ENCODE measurements at regions of chr18 and their contacts with region 1.

Region 1: DNA sequence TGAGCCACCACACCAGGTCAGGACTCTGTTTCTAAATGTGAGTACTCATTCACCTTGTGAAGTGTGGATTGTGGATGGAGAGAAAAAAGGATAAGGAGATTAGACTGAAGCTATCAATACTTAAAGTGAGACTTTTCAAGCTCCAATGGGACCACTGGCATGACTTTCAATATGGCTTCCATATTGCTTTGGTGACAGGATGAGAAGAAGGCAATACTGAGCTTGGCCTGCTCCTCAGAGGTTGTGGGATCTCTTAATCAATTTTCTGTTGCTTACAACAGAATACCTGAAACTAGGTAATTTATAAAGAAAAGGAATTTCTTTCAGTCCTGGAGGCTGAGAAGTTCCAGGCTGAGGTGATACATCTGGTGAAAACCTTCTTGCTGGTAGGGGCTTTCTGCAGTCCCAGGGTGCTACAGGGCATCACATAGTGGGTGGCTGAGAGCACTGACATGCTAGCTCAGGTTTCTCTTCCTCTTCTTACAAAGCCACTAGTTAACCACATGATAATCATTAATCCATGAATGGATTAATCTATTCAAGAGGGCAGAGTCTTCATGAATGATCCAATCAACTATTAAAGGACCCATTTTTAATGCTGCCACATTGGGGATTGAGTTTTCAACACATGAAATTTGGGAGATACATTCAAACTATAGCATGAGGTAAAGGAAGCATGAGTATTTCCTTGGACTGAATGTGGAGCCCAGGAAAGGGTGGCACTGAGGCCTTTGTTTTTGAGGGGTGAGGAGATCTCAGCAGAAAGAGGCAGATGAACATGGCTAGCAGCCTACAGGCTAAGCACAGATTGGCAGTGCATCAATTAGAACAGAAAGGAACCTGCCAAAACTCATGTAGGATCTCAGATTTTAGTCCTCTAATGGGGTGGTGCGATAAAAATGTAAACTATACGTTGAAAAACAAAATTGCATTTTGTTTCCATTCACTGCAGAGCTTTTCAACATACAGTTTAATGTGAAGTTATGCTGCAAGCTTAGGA is 274.5 kb downstream of the PIK3C3 start:
- DNase-seq: peak; percentile 63
- ATAC-seq: peak; percentile 98
- H3K4me3 ChIP-seq: no peak overlapping the region
- H3K27ac ChIP-seq: no peak overlapping the region
- H3K4me1 ChIP-seq: no peaks in the 10 kb centered on the region
- H3K27me3 ChIP-seq: no peaks in the 10 kb centered on the region
- CTCF ChIP-seq: no peak
- EP300 ChIP-seq: peak; percentile 76 to 86; a peak in 3 of 4 replicates
- POLR2A ChIP-seq: no peak
- RAD21 ChIP-seq: no peak

Region 2: DNA sequence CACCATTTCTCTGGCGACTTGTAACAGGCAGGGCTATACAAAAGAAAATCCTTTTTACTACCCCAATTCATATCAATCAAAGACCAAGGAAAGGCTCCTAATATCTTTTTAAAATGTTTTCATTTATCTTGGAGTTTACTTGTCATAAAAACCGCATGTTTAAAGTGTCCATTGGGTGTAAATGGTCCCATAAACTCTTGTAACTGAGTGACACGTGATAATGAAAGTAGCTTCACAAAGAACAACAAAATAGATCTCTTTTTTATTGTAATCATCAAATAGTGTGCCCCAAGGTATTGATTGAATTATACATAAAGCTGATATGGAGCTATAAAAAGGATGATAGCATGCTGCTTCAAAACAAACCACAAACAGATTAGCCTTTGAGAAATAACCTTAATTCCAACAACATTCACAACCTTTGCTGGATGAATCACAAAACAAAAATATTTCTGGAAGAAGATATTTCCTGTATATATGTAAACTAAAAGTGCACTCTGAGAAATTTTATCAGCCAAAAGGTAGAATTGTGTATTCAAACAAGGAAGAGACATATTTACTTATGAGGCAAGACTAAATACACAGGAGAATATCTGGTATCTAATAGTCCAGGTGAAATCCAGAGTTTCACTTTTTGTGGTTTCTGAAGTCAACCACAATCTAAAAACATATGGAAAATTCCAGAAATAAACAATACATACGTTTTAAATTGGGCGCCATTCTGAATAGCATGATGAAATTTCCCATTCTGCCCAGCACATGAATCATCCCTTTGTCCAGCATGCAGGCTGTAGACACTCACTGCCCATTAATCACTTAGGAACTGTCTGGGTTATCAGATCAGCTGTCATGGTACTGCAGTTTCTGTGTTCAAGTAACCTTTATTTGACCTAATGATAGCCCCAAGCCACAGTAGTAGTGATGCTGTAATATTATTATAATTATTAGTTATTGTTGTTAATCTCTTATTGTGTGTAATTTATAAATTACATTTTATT is 37.0 kb before region 1 on chr18:
- CTCF ChIA-PET with region 1: interaction called, 17 read pairs
- POLR2A ChIA-PET with region 1: interaction called, 26 read pairs
- RAD21 ChIA-PET with region 1: interaction called, 95 read pairs
- SMC1A ChIA-PET with region 1: interaction called, 72 read pairs
- in situ Hi-C with region 1: no loop called
- intact Hi-C with region 1: loop called (anchors 1 kb)
- DNase-seq: no peak
- ATAC-seq: 0 out of 3 replicates have a peak, but pooled peaks have one; percentile 7
- H3K4me3 ChIP-seq: no peak overlapping the region
- H3K27ac ChIP-seq: no peak overlapping the region
- H3K4me1 ChIP-seq: no peaks in the 10 kb centered on the region
- H3K27me3 ChIP-seq: no peaks in the 10 kb centered on the region
- CTCF ChIP-seq: no peak
- EP300 ChIP-seq: no peak
- POLR2A ChIP-seq: no peak
- RAD21 ChIP-seq: no peak

Region 3: GRCh38 chr18:42201137-42201536 is 28.4 kb before region 1 on chr18:
- CTCF ChIA-PET with region 1: interaction called, 3 read pairs
- POLR2A ChIA-PET with region 1: interaction called, 4 read pairs
- RAD21 ChIA-PET with region 1: interaction called, 8 read pairs
- SMC1A ChIA-PET with region 1: interaction called, 14 read pairs
- in situ Hi-C with region 1: no loop called
- intact Hi-C with region 1: no loop called
- DNase-seq: no peak
- ATAC-seq: peak; percentile 54
- H3K4me3 ChIP-seq: no peak overlapping the region
- H3K27ac ChIP-seq: no peak overlapping the region
- H3K4me1 ChIP-seq: no peaks in the 10 kb centered on the region
- H3K27me3 ChIP-seq: no peaks in the 10 kb centered on the region
- CTCF ChIP-seq: no peak
- EP300 ChIP-seq: 0 out of 4 replicates have a peak, but pooled peaks of 1 of the 2 experiments have one; percentile 11
- POLR2A ChIP-seq: no peak
- RAD21 ChIP-seq: no peak

Region 4: GRCh38 chr18:42211201-42211600 is 18.3 kb before region 1 on chr18:
- CTCF ChIA-PET with region 1: interaction called, 7 read pairs
- POLR2A ChIA-PET with region 1: no interaction called
- RAD21 ChIA-PET with region 1: no interaction called
- SMC1A ChIA-PET with region 1: interaction called, 10 read pairs
- in situ Hi-C with region 1: no loop called
- intact Hi-C with region 1: no loop called
- DNase-seq: no peak
- ATAC-seq: no peak
- H3K4me3 ChIP-seq: no peak overlapping the region
- H3K27ac ChIP-seq: no peak overlapping the region
- H3K4me1 ChIP-seq: no peaks in the 10 kb centered on the region
- H3K27me3 ChIP-seq: no peaks in the 10 kb centered on the region
- CTCF ChIP-seq: no peak
- EP300 ChIP-seq: no peak
- POLR2A ChIP-seq: no peak
- RAD21 ChIP-seq: no peak

Region 5: GRCh38 chr18:42242758-42243157 is 13.2 kb after region 1 on chr18:
- CTCF ChIA-PET with region 1: interaction called, 4 read pairs
- POLR2A ChIA-PET with region 1: no interaction called
- RAD21 ChIA-PET with region 1: interaction called, 5 read pairs
- SMC1A ChIA-PET with region 1: interaction called, 19 read pairs
- in situ Hi-C with region 1: no loop called
- intact Hi-C with region 1: no loop called
- DNase-seq: no peak
- ATAC-seq: peak; percentile 84
- H3K4me3 ChIP-seq: no peak overlapping the region
- H3K27ac ChIP-seq: no peak overlapping the region
- H3K4me1 ChIP-seq: no peaks in the 10 kb centered on the region
- H3K27me3 ChIP-seq: no peaks in the 10 kb centered on the region
- CTCF ChIP-seq: no peak
- EP300 ChIP-seq: no peak
- POLR2A ChIP-seq: no peak
- RAD21 ChIP-seq: no peak

Region 6: GRCh38 chr18:42274488-42275137 is 45.1 kb after region 1 on chr18:
- CTCF ChIA-PET with region 1: interaction called, 4 read pairs
- POLR2A ChIA-PET with region 1: no interaction called
- RAD21 ChIA-PET with region 1: interaction called, 3 read pairs
- SMC1A ChIA-PET with region 1: interaction called, 23 read pairs
- in situ Hi-C with region 1: no loop called
- intact Hi-C with region 1: no loop called
- DNase-seq: no peak
- ATAC-seq: peak; percentile 92
- H3K4me3 ChIP-seq: no peak overlapping the region
- H3K27ac ChIP-seq: no peak overlapping the region
- H3K4me1 ChIP-seq: no peaks in the 10 kb centered on the region
- H3K27me3 ChIP-seq: no peaks in the 10 kb centered on the region
- CTCF ChIP-seq: peak; percentile 19 to 47 (median 24); a peak in 3 of 6 replicates
- EP300 ChIP-seq: no peak
- POLR2A ChIP-seq: no peak
- RAD21 ChIP-seq: peak; percentile 36; the same call in 1 of the 2 replicates

Measured in GM12878 (cell line).